Heart left ventricle (tissue), 16 donors: ENCODE measurements at regions of chr11 and their contacts with region 1.

Region 1: DNA sequence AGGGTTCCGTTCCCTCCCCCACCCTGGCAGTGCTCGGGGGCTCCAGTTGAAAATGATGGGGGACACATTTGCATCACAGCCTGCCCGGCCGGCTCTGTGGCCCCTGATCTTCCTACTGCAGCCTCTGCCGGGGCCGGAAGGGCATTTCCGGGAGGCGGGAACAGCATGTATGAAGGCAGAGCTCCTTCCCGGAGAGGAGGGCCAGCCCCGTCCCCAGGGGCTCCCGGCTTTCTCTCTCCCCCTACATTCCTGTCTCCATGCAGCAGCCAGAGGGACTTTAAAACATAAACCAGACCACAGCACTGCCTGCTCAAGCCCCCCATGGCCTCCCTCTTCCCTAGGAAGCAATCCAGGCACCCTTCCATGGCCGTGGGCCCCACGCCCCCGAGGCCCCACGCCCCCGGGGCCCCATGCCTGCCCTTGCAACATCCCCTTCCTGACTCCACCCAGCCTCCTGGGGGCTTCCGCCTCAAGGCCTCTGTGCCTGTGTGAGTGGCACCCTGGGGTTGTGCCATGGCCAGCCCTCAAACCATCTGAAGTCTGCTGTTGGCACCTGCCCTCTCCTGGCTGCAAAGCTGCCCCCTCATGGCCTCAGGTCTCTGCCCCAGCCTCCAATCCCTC is 73.1 kb downstream of the CDKN1C start:
- DNase-seq: peak; percentile 63 to 82 (median 77)
- ATAC-seq: peak; percentile 59 to 82 (median 68)
- H3K4me3 ChIP-seq: peak overlapping the region in 10 of 12 donors; percentile 10 to 47 (median 28)
- H3K27ac ChIP-seq: peak overlapping the region; percentile 45 to 86 (median 72)
- H3K4me1 ChIP-seq: peaks cover 2 to 35% (median 28%) of the 10 kb centered on the region in 12 donors
- H3K27me3 ChIP-seq: no peaks in the 10 kb centered on the region
- CTCF ChIP-seq: peak in 1 of 12 donors; percentile 4
- POLR2A ChIP-seq: no peak

Region 2: DNA sequence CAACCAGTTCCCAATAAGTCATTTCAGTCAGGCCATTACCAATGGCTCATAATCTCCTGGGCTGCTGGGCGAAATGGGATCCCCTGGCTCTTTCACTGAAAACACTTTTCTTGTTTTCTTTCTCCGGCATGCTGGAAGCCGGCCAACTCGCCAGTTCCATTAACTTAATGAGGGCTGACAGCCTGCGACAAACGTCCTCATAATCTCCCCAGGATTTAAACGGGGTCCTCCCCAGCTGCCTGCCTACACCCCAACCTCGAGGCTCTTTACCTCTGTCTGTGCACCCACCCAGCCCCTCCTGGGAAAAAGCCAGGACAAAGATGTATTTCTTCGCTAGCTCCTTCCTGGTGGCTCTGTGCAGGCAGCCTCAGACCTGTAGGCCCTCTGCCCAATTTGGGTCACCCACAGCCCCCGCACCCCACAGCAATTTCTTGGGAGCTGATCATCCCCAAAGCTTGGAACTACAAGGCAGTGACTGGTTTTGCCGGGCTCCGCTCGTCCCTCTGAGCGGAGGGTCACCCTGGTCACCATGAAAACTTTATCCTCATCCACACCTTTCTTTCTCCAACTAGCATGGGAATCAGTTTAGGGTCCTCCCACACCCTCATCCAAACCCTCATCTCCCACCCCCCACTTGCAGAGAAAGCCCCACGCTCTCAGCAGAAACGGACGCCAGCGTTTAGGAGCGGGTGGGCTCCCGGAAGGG is 61.6 kb before region 1 on chr11:
- intact Hi-C with region 1: loop called in 1 of 10 experiments (anchors 10 kb)
- DNase-seq: peak in 3 of 5 donors; percentile 18 to 61 (median 22)
- ATAC-seq: no peak
- H3K4me3 ChIP-seq: no peak overlapping the region
- H3K27ac ChIP-seq: no peak overlapping the region
- H3K4me1 ChIP-seq: no peaks in the 10 kb centered on the region
- H3K27me3 ChIP-seq: no peaks in the 10 kb centered on the region
- CTCF ChIP-seq: no peak
- POLR2A ChIP-seq: no peak

Region 3: GRCh38 chr11:2772544-2773031 is 39.9 kb before region 1 on chr11:
- intact Hi-C with region 1: loop called in 1 of 10 experiments (anchors 2 kb)
- DNase-seq: peak in 4 of 5 donors; percentile 3 to 17 (median 11)
- ATAC-seq: no peak
- H3K4me3 ChIP-seq: no peak overlapping the region
- H3K27ac ChIP-seq: no peak overlapping the region
- H3K4me1 ChIP-seq: peaks cover 0 to 7% (median 2%) of the 10 kb centered on the region in 12 donors
- H3K27me3 ChIP-seq: no peaks in the 10 kb centered on the region
- CTCF ChIP-seq: no peak
- POLR2A ChIP-seq: no peak

Region 4: DNA sequence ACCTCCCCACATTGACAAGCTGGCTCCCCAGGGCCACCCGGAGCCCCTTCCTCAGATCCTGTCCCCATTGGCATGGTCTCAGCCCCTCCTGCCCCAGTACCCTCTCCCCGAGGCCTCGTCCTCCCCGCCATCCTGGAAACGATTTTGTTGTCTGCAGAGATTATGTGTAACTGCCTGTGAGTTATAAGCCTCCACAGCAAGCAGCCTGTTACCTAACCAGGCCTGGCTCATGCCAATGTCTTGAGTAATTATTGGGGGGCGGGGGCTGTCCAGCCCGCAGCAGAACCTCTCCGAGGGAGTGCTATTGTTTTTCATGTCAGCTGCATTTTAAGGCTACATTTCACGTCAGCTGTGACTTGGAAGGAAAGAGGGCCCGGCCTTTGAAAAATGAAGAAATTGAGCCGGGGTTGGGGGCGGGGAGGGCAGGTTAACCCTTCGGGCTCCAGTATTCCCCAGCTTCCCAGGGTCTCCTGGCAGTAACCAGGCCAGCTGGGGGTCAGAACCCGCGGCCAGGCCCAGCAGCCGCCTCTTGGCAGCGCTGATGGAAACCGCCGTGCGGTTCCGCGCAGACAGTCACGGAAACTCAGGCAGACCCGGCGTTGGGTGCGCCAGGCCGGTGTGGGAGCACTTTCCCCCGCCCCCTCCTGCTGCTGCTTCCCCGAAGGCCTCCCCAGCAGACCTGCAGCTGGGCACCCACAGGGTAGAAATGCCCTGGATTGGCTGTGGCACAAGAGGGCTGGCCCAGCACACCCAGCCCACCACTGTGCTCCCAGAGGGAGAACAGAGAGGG is 13.6 kb after region 1 on chr11:
- intact Hi-C with region 1: loop called in 1 of 10 experiments (anchors 1 kb)
- DNase-seq: peak; percentile 65 to 80 (median 72)
- ATAC-seq: peak; percentile 53 to 75 (median 74)
- H3K4me3 ChIP-seq: peak overlapping the region in 2 of 12 donors; percentile 1 to 17
- H3K27ac ChIP-seq: peak overlapping the region; percentile 78 to 96 (median 88)
- H3K4me1 ChIP-seq: peaks cover 7 to 49% (median 38%) of the 10 kb centered on the region in 12 donors
- H3K27me3 ChIP-seq: no peaks in the 10 kb centered on the region
- CTCF ChIP-seq: no peak
- POLR2A ChIP-seq: no peak

Region 5: DNA sequence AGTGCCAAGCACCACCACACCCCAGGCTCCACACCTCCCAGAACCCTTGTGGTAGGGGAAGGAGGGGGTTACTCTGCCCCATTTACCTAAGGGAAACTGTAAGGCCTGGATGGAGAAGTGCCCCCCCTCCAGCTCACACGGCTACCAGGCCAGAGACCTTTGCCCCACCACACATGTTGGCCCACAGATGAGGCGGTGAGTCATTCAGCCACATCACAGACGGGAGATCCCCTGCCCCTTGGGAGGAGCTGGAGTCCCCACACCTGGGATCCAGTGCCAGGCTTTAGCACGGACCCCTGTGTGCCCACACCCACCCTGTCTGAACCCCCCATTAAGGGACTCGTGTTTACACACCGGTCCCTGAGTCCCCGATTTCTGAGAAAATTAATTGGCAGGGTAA is 48.2 kb after region 1 on chr11:
- intact Hi-C with region 1: loop called in 1 of 10 experiments (anchors 10 kb)
- DNase-seq: no peak
- ATAC-seq: no peak
- H3K4me3 ChIP-seq: no peak overlapping the region
- H3K27ac ChIP-seq: no peak overlapping the region
- H3K4me1 ChIP-seq: peaks cover 0 to 16% (median 5%) of the 10 kb centered on the region in 12 donors
- H3K27me3 ChIP-seq: peaks cover 0 to 26% (median 8%) of the 10 kb centered on the region in 9 donors
- CTCF ChIP-seq: no peak
- POLR2A ChIP-seq: no peak

Region 6: DNA sequence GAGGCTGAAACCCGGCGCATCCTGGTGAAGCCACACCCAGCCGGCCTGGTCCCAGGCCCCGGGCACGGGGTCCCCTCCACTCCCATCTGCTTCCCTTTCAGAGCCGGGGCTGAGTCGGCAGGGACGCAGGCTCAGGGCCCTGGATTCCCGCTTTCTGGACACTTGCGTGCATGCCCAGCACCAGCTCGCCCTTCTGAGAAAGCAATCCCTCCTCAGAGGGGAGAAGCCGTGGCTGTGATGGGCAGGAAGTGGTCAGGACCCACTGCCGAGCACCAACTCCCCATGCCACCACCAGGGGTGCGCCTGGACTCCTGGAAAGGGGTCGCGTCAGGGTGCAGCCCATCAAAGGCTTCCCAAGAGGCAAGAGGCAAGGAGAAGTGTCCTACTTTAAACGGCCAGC is 58.0 kb after region 1 on chr11:
- intact Hi-C with region 1: loop called in 2 of 10 experiments (anchors 10 kb)
- DNase-seq: no peak
- ATAC-seq: no peak
- H3K4me3 ChIP-seq: no peak overlapping the region
- H3K27ac ChIP-seq: no peak overlapping the region
- H3K4me1 ChIP-seq: peaks cover 0 to 21% (median 4%) of the 10 kb centered on the region in 12 donors
- H3K27me3 ChIP-seq: peaks cover 11 to 44% (median 19%) of the 10 kb centered on the region in 9 donors
- CTCF ChIP-seq: no peak
- POLR2A ChIP-seq: no peak